ENCODE measurements at regions of chr18 and their contacts with region 1.

Region 1: DNA sequence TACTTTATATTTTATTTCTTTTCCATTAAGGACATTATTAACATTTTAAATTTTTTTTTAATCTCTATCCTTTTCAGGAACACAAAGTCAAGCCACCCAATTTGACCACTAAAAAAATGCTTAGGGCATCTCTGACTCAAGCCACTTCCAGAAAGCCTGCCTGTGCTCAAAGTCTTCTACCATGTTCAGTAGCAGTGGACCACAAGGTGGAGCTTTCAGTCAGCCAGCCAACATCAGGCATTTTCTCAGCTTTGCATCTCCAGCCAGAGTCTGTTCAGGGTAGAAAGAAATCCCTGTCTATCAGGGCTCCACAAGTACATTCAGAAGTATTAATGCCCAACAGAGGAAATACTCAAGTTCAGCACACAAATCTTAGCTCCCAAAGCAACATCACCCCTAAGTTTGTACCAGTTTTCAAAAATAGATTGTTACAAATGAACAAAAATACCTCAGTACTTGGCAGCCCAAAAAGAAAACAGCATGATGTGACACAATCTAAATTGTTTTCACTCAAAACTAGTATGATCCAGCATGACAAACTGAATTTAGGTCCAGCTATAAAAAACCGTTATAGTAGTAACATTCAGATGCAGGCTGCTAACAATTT is 37.6 kb downstream of the C18orf63 start:
- DNase-seq: peak; percentile 35
- H3K4me3 ChIP-seq: no peak overlapping the region
- H3K27ac ChIP-seq: no peak overlapping the region
- H3K4me1 ChIP-seq: no peaks in the 10 kb centered on the region
- H3K27me3 ChIP-seq: peaks cover 11% of the 10 kb centered on the region
- CTCF ChIP-seq: peak; percentile 62
- EP300 ChIP-seq: no peak
- RAD21 ChIP-seq: peak; percentile 75

Region 2: DNA sequence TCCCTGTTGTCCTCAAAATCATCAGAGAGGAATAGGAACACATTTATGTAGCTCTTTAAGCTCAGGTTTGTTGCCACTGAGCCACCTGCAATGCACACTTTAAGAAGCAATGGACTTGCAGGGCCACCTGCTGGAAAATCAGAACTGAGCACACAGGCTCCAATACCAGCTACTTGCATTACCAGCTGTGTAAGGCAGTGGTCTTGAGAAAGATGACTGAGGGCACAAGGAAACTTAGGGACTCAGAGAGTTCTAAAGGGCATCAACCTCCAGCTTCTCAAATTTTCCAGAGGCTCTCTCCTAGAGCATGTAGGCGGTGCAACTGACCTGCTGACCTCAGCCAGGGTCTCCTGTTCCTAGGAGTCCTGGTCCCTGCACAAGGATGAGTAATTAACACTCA is 140.4 kb after region 1 on chr18:
- CTCF ChIA-PET with region 1: interaction called, 33 read pairs
- POLR2A ChIA-PET with region 1: no interaction called
- DNase-seq: no peak
- H3K4me3 ChIP-seq: no peak overlapping the region
- H3K27ac ChIP-seq: no peak overlapping the region
- H3K4me1 ChIP-seq: peaks cover 0 to 4% of the 10 kb centered on the region in 2 experiments; a peak in 1 of 4 replicates
- H3K27me3 ChIP-seq: peaks cover 36% of the 10 kb centered on the region
- CTCF ChIP-seq: peak; percentile 51
- EP300 ChIP-seq: no peak
- RAD21 ChIP-seq: peak; percentile 73

Measured in SK-N-SH (cell line).